GM12878 (cell line): ENCODE measurements at regions of chr9 and their contacts with region 1.

Region 1: GRCh38 chr9:103397868-103398600 is 402.9 kb downstream of the CYLC2 start:
- DNase-seq: no peak
- ATAC-seq: peak; percentile 88
- H3K4me3 ChIP-seq: no peak overlapping the region
- H3K27ac ChIP-seq: no peak overlapping the region
- H3K4me1 ChIP-seq: no peaks in the 10 kb centered on the region
- H3K27me3 ChIP-seq: no peaks in the 10 kb centered on the region
- CTCF ChIP-seq: peak; percentile 71 to 72 (median 71); a peak in 5 of 6 replicates
- EP300 ChIP-seq: no peak
- POLR2A ChIP-seq: no peak
- RAD21 ChIP-seq: peak; percentile 64

Region 2: DNA sequence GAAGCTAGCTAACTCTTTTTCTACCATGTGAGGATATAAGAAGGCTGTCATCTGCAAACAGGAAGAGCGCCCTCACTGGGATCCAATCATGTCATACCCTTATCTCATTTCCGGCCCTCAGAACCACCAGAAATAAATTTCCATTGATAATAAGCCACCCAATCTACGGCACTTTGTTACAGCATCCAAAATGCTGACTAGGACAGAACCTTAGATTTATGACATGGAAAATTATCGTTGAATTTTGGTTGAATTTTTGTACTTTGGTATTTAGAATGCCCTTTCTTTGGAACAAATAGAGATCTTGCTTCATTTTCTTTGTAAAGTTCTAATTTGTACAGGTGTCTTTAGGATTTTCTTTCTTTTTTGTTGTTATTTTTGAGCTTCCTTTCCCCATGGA is 456.2 kb before region 1 on chr9:
- CTCF ChIA-PET with region 1: no interaction called
- POLR2A ChIA-PET with region 1: no interaction called
- RAD21 ChIA-PET with region 1: no interaction called
- SMC1A ChIA-PET with region 1: no interaction called
- in situ Hi-C with region 1: no loop called
- intact Hi-C with region 1: no loop called
- DNase-seq: no peak
- ATAC-seq: no peak
- H3K4me3 ChIP-seq: no peak overlapping the region
- H3K27ac ChIP-seq: no peak overlapping the region
- H3K4me1 ChIP-seq: no peaks in the 10 kb centered on the region
- H3K27me3 ChIP-seq: no peaks in the 10 kb centered on the region
- CTCF ChIP-seq: no peak
- EP300 ChIP-seq: no peak
- POLR2A ChIP-seq: no peak
- RAD21 ChIP-seq: no peak

Region 3: GRCh38 chr9:103261951-103262350 is 136.1 kb before region 1 on chr9:
- CTCF ChIA-PET with region 1: no interaction called
- POLR2A ChIA-PET with region 1: no interaction called
- RAD21 ChIA-PET with region 1: no interaction called
- SMC1A ChIA-PET with region 1: no interaction called
- in situ Hi-C with region 1: no loop called
- intact Hi-C with region 1: no loop called
- DNase-seq: no peak
- ATAC-seq: no peak
- H3K4me3 ChIP-seq: no peak overlapping the region
- H3K27ac ChIP-seq: no peak overlapping the region
- H3K4me1 ChIP-seq: no peaks in the 10 kb centered on the region
- H3K27me3 ChIP-seq: no peaks in the 10 kb centered on the region
- CTCF ChIP-seq: no peak
- EP300 ChIP-seq: no peak
- POLR2A ChIP-seq: no peak
- RAD21 ChIP-seq: no peak

Region 4: GRCh38 chr9:103928442-103928841 is 530.4 kb after region 1 on chr9:
- CTCF ChIA-PET with region 1: no interaction called
- POLR2A ChIA-PET with region 1: no interaction called
- RAD21 ChIA-PET with region 1: no interaction called
- SMC1A ChIA-PET with region 1: no interaction called
- in situ Hi-C with region 1: no loop called
- intact Hi-C with region 1: loop called (anchors 10 kb)
- DNase-seq: no peak
- ATAC-seq: no peak
- H3K4me3 ChIP-seq: no peak overlapping the region
- H3K27ac ChIP-seq: no peak overlapping the region
- H3K4me1 ChIP-seq: no peaks in the 10 kb centered on the region
- H3K27me3 ChIP-seq: no peaks in the 10 kb centered on the region
- CTCF ChIP-seq: no peak
- EP300 ChIP-seq: no peak
- POLR2A ChIP-seq: no peak
- RAD21 ChIP-seq: no peak